GM12878 (cell line): ENCODE measurements at regions of chr19 and their contacts with region 1.

Region 1: DNA sequence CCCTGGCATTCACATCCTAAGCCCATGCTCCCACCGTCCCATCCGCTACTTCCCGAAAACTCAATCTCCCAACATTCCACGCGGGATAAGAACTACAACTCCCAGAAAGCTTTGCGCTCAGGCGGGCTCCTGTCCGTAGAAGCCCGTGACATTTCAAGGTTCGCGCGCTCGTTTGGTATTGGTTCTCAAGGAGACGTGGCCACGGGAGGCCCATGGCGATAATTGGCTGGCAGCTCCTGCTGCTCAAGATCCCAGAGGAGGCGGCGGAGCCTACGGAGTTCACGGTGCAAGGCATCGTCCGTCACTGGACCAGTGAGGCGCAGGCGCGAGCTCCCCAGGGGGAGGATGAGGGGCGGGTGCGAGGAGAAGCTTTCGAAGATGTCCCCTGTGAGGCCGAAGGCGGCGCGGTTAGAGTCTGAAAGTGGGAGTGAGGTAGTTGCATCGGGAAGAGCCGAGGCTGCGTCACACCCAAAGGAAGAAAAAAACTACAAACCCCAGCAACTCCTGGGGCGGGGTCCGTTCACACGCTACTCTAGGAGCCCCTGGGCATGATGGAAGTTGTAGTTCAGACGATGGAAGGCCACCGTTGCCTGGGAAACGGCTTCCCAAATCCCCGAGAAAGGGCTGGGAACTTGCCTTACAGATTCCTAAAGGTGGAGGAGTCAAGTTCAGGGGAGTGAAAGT is 1.2 kb upstream of the MAMSTR start:
- DNase-seq: peak; percentile 90
- ATAC-seq: peak; percentile 99
- H3K4me3 ChIP-seq: peak overlapping the region; percentile 59
- H3K27ac ChIP-seq: peak overlapping the region; percentile 75
- H3K4me1 ChIP-seq: peaks cover 4% of the 10 kb centered on the region
- H3K27me3 ChIP-seq: no peaks in the 10 kb centered on the region
- CTCF ChIP-seq: no peak
- EP300 ChIP-seq: no peak
- POLR2A ChIP-seq: peak; percentile 80
- RAD21 ChIP-seq: no peak

Region 2: GRCh38 chr19:48674921-48675824 is 45.6 kb before region 1 on chr19:
- CTCF ChIA-PET with region 1: interaction called, 11 read pairs
- POLR2A ChIA-PET with region 1: no interaction called
- RAD21 ChIA-PET with region 1: no interaction called
- SMC1A ChIA-PET with region 1: interaction called, 3 read pairs
- in situ Hi-C with region 1: no loop called
- intact Hi-C with region 1: no loop called
- DNase-seq: no peak
- ATAC-seq: peak; percentile 95
- H3K4me3 ChIP-seq: no peak overlapping the region
- H3K27ac ChIP-seq: no peak overlapping the region
- H3K4me1 ChIP-seq: no peaks in the 10 kb centered on the region
- H3K27me3 ChIP-seq: peaks cover 0 to 2% of the 10 kb centered on the region in 2 experiments; a peak in 2 of 4 replicates
- CTCF ChIP-seq: peak; percentile 81 to 89 (median 85)
- EP300 ChIP-seq: no peak
- POLR2A ChIP-seq: no peak
- RAD21 ChIP-seq: peak; percentile 64

Region 3: GRCh38 chr19:48802623-48803022 is 81.9 kb after region 1 on chr19:
- CTCF ChIA-PET with region 1: no interaction called
- POLR2A ChIA-PET with region 1: no interaction called
- RAD21 ChIA-PET with region 1: no interaction called
- SMC1A ChIA-PET with region 1: no interaction called
- in situ Hi-C with region 1: no loop called
- intact Hi-C with region 1: no loop called
- DNase-seq: no peak
- ATAC-seq: no peak
- H3K4me3 ChIP-seq: no peak overlapping the region
- H3K27ac ChIP-seq: no peak overlapping the region
- H3K4me1 ChIP-seq: peaks cover 6% of the 10 kb centered on the region
- H3K27me3 ChIP-seq: no peaks in the 10 kb centered on the region
- CTCF ChIP-seq: no peak
- EP300 ChIP-seq: no peak
- POLR2A ChIP-seq: no peak
- RAD21 ChIP-seq: no peak

Region 4: GRCh38 chr19:49614096-49614833 is 893.5 kb after region 1 on chr19:
- CTCF ChIA-PET with region 1: no interaction called
- POLR2A ChIA-PET with region 1: no interaction called
- RAD21 ChIA-PET with region 1: no interaction called
- SMC1A ChIA-PET with region 1: no interaction called
- in situ Hi-C with region 1: no loop called
- intact Hi-C with region 1: no loop called
- DNase-seq: no peak
- ATAC-seq: no peak
- H3K4me3 ChIP-seq: no peak overlapping the region
- H3K27ac ChIP-seq: peak overlapping the region; percentile 25; the same call in 1 of the 2 replicates
- H3K4me1 ChIP-seq: no peaks in the 10 kb centered on the region; the same call in 1 of the 2 replicates
- H3K27me3 ChIP-seq: no peaks in the 10 kb centered on the region
- CTCF ChIP-seq: no peak
- EP300 ChIP-seq: no peak
- POLR2A ChIP-seq: no peak
- RAD21 ChIP-seq: no peak